GM10248 (cell line): ENCODE measurements at regions of chr18 and their contacts with region 1.

Region 1: DNA sequence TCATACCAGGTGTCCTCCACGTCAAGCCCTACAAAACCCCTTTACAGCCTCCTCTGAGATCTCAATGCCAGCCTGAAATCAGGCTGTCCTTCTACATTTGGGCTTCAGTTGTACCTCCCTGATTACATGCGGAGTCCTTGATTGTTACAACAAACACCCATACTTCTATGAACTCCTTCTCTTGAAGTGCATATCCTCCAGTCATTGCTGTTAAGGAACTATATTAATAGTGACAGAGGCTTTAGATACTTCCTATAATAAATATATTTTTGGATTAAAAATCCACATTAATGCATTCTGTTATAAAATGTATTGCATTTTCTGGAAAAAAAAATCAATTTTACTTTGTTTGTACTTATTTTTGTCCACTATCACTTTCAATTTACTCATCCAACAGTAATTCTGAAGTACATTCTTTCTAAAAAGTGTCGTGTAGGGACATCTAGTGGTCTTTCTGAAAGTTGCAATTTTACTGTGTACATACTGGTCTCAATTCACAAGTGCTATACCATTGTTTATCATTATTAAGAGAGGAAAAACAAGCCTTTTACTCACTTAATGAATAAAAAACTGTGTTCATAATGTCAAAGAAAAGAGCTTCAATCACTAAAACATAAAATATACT is 316.4 kb downstream of the DSEL start:
- DNase-seq: peak; percentile 27
- CTCF ChIP-seq: peak; percentile 61

Region 2: GRCh38 chr18:67104700-67105284 is 95.3 kb before region 1 on chr18:
- CTCF ChIA-PET with region 1: interaction called, 67 read pairs
- POLR2A ChIA-PET with region 1: no interaction called
- DNase-seq: peak; percentile 15
- CTCF ChIP-seq: peak; percentile 84

Region 3: DNA sequence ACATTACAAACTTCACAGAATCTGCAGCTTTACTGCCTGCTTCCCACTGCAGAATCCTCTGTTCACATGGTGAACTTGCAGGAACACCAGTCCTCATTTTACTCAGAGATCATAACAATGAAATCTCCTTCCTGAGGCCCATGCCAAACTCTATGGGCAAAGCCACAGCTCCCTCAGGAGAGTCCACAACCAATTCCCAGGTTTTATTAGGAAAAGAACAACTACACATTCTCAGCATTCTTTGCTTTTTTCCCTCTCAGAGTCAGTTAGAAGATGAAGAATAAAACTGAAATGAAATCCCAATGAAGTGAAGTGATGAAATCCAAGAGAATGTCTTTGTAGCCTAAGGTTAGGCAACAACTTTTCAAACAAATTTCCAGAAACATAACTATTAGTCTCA is 82.7 kb after region 1 on chr18:
- CTCF ChIA-PET with region 1: no interaction called
- POLR2A ChIA-PET with region 1: no interaction called
- DNase-seq: no peak
- CTCF ChIP-seq: no peak